Common myeloid progenitor, CD34-positive (primary cell): ENCODE measurements at regions of chr14 and their contacts with region 1.

Region 1: GRCh38 chr14:21912367-21912766 is 238.7 kb upstream of the OR4E1 start:
- DNase-seq: peak in 1 of 3 donors; percentile 15
- H3K4me3 ChIP-seq: no peak overlapping the region
- H3K27ac ChIP-seq: no peak overlapping the region
- H3K4me1 ChIP-seq: peaks cover 8 to 14% (median 11%) of the 10 kb centered on the region in 4 experiments
- H3K27me3 ChIP-seq: no peaks in the 10 kb centered on the region

Region 2: DNA sequence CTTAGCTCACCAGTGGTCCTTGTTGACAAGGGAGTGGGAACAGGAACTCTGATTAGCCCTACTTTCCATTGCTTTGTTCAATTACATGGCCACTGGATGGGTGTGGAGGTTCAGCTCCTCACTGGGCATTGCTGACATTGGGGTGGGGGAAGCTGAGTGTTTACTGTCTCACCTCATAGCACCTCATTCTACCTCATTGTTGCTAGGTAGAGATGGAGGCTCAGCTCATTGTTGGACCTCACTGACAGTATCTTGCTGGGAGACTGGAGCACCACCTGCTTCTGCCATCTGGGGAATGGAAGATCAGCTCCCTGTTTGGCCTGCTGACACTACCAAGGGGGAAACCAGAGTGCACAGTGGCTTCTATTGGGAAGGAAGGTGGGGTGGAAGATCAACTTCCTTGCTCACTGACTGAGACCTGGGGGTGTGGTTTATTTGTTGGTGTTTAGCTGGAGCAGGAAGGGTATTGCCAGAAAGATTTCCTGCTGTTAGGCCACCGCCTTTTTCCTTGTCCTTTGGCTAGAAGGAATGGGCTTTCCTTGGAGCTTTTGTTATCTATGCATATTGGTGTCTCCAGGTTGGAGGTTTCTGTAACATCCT is 260.1 kb before region 1 on chr14:
- CTCF ChIA-PET with region 1: no interaction called
- POLR2A ChIA-PET with region 1: no interaction called
- DNase-seq: no peak
- H3K4me3 ChIP-seq: no peak overlapping the region
- H3K27ac ChIP-seq: no peak overlapping the region
- H3K4me1 ChIP-seq: peaks cover 0 to 5% (median 2%) of the 10 kb centered on the region in 4 experiments
- H3K27me3 ChIP-seq: no peaks in the 10 kb centered on the region

Region 3: DNA sequence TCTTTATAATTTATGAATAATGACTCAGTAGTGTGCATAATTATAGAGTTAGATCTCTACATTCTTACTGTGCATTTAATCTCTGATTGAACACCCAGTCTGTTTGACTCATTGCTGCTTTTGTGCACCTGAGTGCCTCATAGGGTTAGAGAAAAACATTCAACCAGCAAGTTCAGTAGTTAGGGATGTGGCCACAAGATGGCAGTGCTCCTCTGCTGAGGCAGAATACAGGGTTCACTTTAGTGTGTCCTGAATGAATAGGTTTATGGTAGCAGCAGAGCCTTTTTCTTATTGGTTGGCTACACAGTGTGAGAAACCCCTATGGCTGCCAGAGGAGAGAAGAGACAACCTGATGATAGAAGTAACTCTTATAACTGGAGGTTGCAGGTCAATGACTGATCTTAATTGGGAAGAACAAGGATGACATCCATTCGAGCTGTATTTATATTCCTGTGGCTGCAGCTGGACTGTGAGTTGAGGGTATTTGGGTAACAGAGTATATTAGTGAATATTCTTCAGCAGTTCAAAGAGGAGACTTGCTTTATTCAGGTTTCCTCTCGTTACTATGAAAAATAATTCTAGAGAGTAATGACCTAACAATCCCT is 43.8 kb before region 1 on chr14:
- CTCF ChIA-PET with region 1: interaction called, 14 read pairs
- POLR2A ChIA-PET with region 1: no interaction called
- DNase-seq: peak; percentile 77 to 84 (median 80)
- H3K4me3 ChIP-seq: no peak overlapping the region
- H3K27ac ChIP-seq: no peak overlapping the region
- H3K4me1 ChIP-seq: peaks cover 2 to 15% (median 13%) of the 10 kb centered on the region in 4 experiments
- H3K27me3 ChIP-seq: no peaks in the 10 kb centered on the region